ENCODE measurements at regions of chr1 and their contacts with region 1.

Region 1: GRCh38 chr1:152001391-152002249 is 8.0 kb upstream of the S100A10 start:
- DNase-seq: peak; percentile 89 to 91
- H3K4me3 ChIP-seq: no peak overlapping the region
- H3K4me3 Mint-ChIP-seq: no peak overlapping the region
- H3K27ac Mint-ChIP-seq: peak overlapping the region; percentile 82
- H3K4me1 ChIP-seq: peaks cover 48% of the 10 kb centered on the region
- H3K4me1 Mint-ChIP-seq: peaks cover 49% of the 10 kb centered on the region
- H3K27me3 ChIP-seq: no peaks in the 10 kb centered on the region
- H3K27me3 Mint-ChIP-seq: no peaks in the 10 kb centered on the region
- CTCF ChIP-seq: peak; percentile 92 to 94

Region 2: DNA sequence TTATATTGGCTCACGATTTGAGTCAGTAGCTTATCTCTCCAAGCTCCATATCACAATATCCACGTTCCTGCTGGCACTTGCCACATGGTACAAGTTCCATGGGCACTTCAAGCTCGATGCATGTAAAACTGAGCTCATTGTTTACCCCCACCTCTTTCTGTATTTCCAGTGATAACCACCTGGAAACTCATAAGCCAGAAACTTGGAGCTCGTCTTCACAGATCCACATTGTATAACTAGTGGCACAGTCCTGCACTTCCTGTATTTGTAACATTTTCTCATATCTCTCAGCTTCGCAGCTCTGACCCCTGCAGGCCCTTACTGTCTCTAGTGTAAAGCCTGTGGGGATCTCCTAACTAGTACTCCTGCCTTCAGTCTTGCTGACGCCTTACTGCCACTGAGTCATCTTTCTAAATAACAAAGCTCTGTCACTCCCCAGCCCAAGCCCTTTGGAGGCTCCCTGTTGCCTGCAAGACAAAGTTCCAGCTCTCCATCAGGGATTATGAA is 155.5 kb before region 1 on chr1:
- CTCF ChIA-PET with region 1: no interaction called
- POLR2A ChIA-PET with region 1: no interaction called
- intact Hi-C with region 1: no loop called
- DNase-seq: no peak
- H3K4me3 ChIP-seq: no peak overlapping the region
- H3K4me3 Mint-ChIP-seq: no peak overlapping the region
- H3K27ac Mint-ChIP-seq: no peak overlapping the region
- H3K4me1 ChIP-seq: no peaks in the 10 kb centered on the region
- H3K4me1 Mint-ChIP-seq: no peaks in the 10 kb centered on the region
- H3K27me3 ChIP-seq: no peaks in the 10 kb centered on the region
- H3K27me3 Mint-ChIP-seq: peaks cover 3% of the 10 kb centered on the region
- CTCF ChIP-seq: peak in 1 of 2 experiments; percentile 20

Region 3: DNA sequence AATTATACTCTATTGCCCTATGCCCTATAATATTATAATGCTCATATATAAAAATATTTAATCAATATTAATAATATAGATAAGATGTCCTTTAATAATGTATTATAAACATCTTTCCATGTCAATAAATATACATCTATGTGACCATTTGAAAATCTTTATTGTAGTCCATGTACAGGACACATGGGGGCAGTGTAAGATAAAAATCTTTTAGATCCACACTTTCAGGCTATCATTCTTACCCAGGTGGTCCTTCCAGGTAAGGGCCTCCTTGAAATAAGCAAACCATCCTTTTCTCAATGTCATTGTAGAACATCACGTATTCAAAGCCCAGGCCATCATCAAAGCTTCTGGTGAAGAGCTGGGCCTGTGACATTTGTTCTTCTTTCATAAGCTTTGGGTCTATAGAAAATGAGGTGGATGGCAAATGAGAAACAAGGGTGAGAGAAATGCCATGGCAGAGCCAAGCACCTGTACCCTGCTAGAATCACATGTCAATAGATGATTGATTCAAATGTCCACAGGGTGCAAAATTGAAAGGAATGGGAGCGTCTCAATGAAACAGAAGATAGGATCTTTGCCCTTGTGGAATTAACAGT is 112.5 kb before region 1 on chr1:
- CTCF ChIA-PET with region 1: interaction called, 6 read pairs
- POLR2A ChIA-PET with region 1: no interaction called
- intact Hi-C with region 1: loop called (anchors 1 kb)
- DNase-seq: peak in 1 of 2 experiments; percentile 20
- H3K4me3 ChIP-seq: no peak overlapping the region
- H3K4me3 Mint-ChIP-seq: no peak overlapping the region
- H3K27ac Mint-ChIP-seq: no peak overlapping the region
- H3K4me1 ChIP-seq: no peaks in the 10 kb centered on the region
- H3K4me1 Mint-ChIP-seq: peaks cover 6% of the 10 kb centered on the region
- H3K27me3 ChIP-seq: no peaks in the 10 kb centered on the region
- H3K27me3 Mint-ChIP-seq: no peaks in the 10 kb centered on the region
- CTCF ChIP-seq: peak; percentile 38 to 53

Region 4: DNA sequence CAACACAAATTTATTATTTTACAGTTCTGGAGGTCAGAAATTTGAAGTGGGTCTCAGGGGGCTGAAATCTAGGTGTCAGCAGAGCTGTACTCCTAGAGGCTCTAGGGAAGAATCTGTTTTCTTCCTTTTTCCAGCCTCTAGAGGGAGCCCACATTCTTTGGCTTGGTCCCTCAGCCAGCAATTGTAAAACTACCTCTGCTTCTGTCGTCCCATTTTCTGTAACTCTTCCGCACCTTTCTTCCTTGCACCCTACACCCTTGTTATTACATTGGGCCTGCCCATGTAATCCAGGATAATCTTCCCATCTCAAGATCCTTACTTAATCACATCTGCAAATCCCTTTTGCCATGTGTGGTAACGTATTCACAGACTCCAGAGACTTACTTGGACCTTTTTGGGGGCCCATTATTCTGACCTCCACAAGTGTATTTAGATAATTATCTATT is 67.5 kb before region 1 on chr1:
- CTCF ChIA-PET with region 1: interaction called, 120 read pairs
- POLR2A ChIA-PET with region 1: interaction called, 4 read pairs
- intact Hi-C with region 1: loop called (anchors 1 kb)
- DNase-seq: peak; percentile 48 to 78
- H3K4me3 ChIP-seq: no peak overlapping the region
- H3K4me3 Mint-ChIP-seq: no peak overlapping the region
- H3K27ac Mint-ChIP-seq: peak overlapping the region; percentile 63
- H3K4me1 ChIP-seq: peaks cover 32% of the 10 kb centered on the region
- H3K4me1 Mint-ChIP-seq: peaks cover 34% of the 10 kb centered on the region
- H3K27me3 ChIP-seq: no peaks in the 10 kb centered on the region
- H3K27me3 Mint-ChIP-seq: no peaks in the 10 kb centered on the region
- CTCF ChIP-seq: peak; percentile 85 to 87

Region 5: DNA sequence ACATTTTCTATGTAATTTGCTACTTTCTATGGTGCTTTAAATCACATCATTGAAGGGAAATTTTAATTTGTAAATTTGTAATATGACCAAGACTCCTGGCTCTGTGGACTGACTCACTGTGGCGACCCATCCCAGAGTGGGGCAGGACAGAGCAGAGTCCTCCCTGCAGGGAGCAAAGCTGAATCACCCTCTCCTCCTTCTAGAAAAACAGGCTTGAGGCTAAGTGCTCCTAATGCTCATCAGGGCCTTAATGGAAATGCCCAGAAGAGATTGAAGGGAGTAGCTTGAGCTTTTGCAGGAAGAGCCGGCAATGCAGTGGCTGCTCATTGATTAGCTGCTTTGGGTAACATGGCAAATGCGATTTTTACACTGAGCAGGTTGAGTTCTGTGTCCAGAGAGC is 24.8 kb before region 1 on chr1:
- CTCF ChIA-PET with region 1: interaction called, 249 read pairs
- POLR2A ChIA-PET with region 1: interaction called, 13 read pairs
- intact Hi-C with region 1: no loop called
- DNase-seq: no peak
- H3K4me3 ChIP-seq: no peak overlapping the region
- H3K4me3 Mint-ChIP-seq: peak overlapping the region; percentile 56
- H3K27ac Mint-ChIP-seq: peak overlapping the region; percentile 85
- H3K4me1 ChIP-seq: peaks cover 94% of the 10 kb centered on the region
- H3K4me1 Mint-ChIP-seq: peaks cover 71% of the 10 kb centered on the region
- H3K27me3 ChIP-seq: no peaks in the 10 kb centered on the region
- H3K27me3 Mint-ChIP-seq: no peaks in the 10 kb centered on the region
- CTCF ChIP-seq: no peak

Region 6: DNA sequence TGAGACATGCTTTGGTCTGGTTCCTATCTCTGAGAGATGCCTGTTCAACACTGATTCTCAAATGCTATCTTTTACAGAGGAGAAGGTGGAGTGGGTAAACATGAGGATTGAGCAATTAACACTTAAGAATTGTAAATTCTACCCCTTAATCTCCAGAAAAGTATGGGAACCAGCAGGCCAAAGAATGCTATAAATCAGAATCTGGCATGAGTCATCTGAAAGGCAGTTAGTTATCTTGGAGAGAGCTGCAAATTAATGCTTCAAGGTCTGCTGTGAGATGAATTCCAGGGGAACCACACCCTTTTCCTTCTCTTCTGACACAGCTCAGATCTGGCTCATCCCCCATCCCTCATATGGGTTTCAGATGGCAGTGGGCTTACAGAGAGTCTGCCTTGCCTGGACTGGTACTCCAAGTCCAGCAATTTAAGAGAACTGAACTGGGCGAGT is 13.2 kb before region 1 on chr1:
- CTCF ChIA-PET with region 1: interaction called, 14 read pairs
- POLR2A ChIA-PET with region 1: interaction called, 20 read pairs
- intact Hi-C with region 1: loop called (anchors 1 kb)
- DNase-seq: peak; percentile 83 to 88
- H3K4me3 ChIP-seq: no peak overlapping the region
- H3K4me3 Mint-ChIP-seq: peak overlapping the region; percentile 88
- H3K27ac Mint-ChIP-seq: peak overlapping the region; percentile 99
- H3K4me1 ChIP-seq: peaks cover 67% of the 10 kb centered on the region
- H3K4me1 Mint-ChIP-seq: peaks cover 54% of the 10 kb centered on the region
- H3K27me3 ChIP-seq: no peaks in the 10 kb centered on the region
- H3K27me3 Mint-ChIP-seq: no peaks in the 10 kb centered on the region
- CTCF ChIP-seq: no peak

Region 7: GRCh38 chr1:152013664-152014237 is 12.1 kb after region 1 on chr1:
- CTCF ChIA-PET with region 1: interaction called, 19 read pairs
- POLR2A ChIA-PET with region 1: no interaction called
- intact Hi-C with region 1: loop called (anchors 1 kb)
- DNase-seq: peak; percentile 68 to 69
- H3K4me3 ChIP-seq: no peak overlapping the region
- H3K4me3 Mint-ChIP-seq: no peak overlapping the region
- H3K27ac Mint-ChIP-seq: no peak overlapping the region
- H3K4me1 ChIP-seq: 0 out of 2 replicates have a peak, but pooled peaks cover 3% of the 10 kb centered on the region
- H3K4me1 Mint-ChIP-seq: peaks cover 7% of the 10 kb centered on the region
- H3K27me3 ChIP-seq: no peaks in the 10 kb centered on the region
- H3K27me3 Mint-ChIP-seq: no peaks in the 10 kb centered on the region
- CTCF ChIP-seq: peak; percentile 76 to 86